PC-9 (cell line): ENCODE measurements at regions of chr9 and their contacts with region 1.

Region 1: GRCh38 chr9:113331780-113332179 is 8.3 kb downstream of the WDR31 start:
- DNase-seq: no peak
- H3K4me3 ChIP-seq: no peak overlapping the region
- H3K27ac ChIP-seq: no peak overlapping the region
- H3K4me1 ChIP-seq: no peaks in the 10 kb centered on the region
- H3K27me3 ChIP-seq: no peaks in the 10 kb centered on the region
- CTCF ChIP-seq: no peak

Region 2: DNA sequence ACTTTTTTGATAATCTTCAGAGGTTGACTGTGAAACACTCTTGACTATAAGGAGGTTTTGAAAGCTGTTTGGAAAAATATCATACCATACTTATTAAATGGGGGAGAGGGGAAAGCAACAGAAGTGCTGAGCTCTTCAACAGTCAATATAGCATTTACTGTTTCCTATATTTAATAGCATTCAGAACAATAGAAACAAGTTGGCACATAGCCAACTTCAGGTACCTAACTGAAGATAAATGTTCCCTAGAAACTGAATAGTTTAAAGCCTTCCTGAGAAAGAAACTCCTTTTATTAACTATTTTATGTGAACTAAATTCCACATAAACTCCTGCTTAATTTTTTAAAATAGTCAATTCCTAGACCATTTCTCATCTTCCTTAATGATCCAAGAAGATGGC is 84.1 kb before region 1 on chr9:
- CTCF ChIA-PET with region 1: no interaction called
- POLR2A ChIA-PET with region 1: no interaction called
- intact Hi-C with region 1: no loop called
- DNase-seq: no peak
- H3K4me3 ChIP-seq: no peak overlapping the region
- H3K27ac ChIP-seq: no peak overlapping the region
- H3K4me1 ChIP-seq: no peaks in the 10 kb centered on the region
- H3K27me3 ChIP-seq: no peaks in the 10 kb centered on the region
- CTCF ChIP-seq: no peak

Region 3: DNA sequence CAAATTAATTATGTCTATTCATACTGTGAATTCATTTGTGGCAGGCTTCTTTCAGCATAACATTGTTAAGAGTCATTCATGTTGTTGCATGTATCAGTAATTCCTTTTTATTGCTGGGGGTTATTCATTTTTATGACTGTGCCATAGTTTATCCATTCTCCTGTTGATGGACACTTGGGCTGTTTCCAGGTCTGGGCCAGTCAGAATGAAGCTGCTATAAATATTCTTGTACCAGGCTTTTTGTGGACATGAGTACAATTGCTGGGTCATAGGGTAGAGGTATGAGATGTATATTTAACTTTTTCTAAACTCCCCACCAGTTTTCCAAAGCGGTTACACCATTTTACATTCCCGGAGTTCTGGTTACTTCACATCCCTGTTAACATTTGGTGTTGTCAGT is 42.7 kb before region 1 on chr9:
- CTCF ChIA-PET with region 1: no interaction called
- POLR2A ChIA-PET with region 1: no interaction called
- intact Hi-C with region 1: no loop called
- DNase-seq: no peak
- H3K4me3 ChIP-seq: no peak overlapping the region
- H3K27ac ChIP-seq: no peak overlapping the region
- H3K4me1 ChIP-seq: no peaks in the 10 kb centered on the region
- H3K27me3 ChIP-seq: no peaks in the 10 kb centered on the region
- CTCF ChIP-seq: no peak

Region 4: DNA sequence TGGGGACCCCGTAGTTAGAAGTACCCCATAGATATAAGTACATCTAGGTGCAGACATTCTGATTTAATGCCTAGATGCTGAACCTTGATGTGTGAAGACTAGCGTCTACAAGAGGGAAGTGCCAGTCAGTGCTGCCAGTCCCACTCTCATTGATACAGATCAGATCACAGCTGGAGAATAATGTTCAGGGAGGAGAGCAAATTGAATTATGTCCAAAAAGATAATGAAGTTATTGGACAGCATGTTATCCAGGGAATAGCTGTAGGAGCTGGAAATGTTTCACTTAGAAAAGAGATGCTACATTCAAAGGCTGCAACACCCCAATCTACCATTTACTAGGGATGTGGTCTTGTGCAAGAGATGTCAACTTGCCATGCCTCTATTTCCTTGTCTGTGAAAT is 12.7 kb before region 1 on chr9:
- CTCF ChIA-PET with region 1: no interaction called
- POLR2A ChIA-PET with region 1: interaction called, 28 read pairs
- intact Hi-C with region 1: no loop called
- DNase-seq: no peak
- H3K4me3 ChIP-seq: no peak overlapping the region
- H3K27ac ChIP-seq: no peak overlapping the region
- H3K4me1 ChIP-seq: no peaks in the 10 kb centered on the region
- H3K27me3 ChIP-seq: no peaks in the 10 kb centered on the region
- CTCF ChIP-seq: no peak

Region 5: DNA sequence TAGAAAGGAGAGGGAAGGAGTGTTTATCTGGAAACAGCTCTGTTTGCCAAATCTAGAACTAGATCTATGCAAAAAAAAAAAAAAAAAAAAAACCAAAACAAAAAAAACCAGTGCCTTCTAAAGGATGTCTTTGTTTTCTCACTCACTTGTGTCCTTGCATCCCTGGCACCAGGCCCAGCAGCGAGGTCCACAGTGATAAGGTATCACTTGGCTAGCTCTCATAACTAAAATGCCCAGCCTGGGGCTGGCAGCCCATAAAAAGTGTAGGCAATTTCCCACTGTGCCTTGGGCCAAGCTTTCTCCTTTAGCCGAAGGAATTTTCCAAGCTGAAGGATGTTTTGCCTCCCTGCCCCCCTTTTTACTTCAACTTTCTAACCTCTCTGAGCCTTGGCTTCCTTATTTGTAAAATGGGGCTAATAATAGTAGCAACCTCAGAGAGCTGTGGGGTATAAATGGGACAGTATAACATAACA is 152.5 kb after region 1 on chr9:
- CTCF ChIA-PET with region 1: no interaction called
- POLR2A ChIA-PET with region 1: no interaction called
- intact Hi-C with region 1: no loop called
- DNase-seq: no peak
- H3K4me3 ChIP-seq: no peak overlapping the region
- H3K27ac ChIP-seq: no peak overlapping the region
- H3K4me1 ChIP-seq: 0 out of 2 replicates have a peak, but pooled peaks cover 3% of the 10 kb centered on the region
- H3K27me3 ChIP-seq: no peaks in the 10 kb centered on the region
- CTCF ChIP-seq: no peak